ENCODE measurements at regions of chr18 and their contacts with region 1.

Region 1: GRCh38 chr18:75261430-75262223 is 51.0 kb downstream of the TSHZ1 start:
- DNase-seq: peak; percentile 35
- H3K4me3 Mint-ChIP-seq: no peak overlapping the region
- H3K27ac Mint-ChIP-seq: peak overlapping the region; percentile 75
- H3K4me1 Mint-ChIP-seq: peaks cover 33% of the 10 kb centered on the region
- H3K27me3 Mint-ChIP-seq: no peaks in the 10 kb centered on the region

Region 2: GRCh38 chr18:75247611-75248421 is 13.8 kb before region 1 on chr18:
- CTCF ChIA-PET with region 1: interaction called, 5 read pairs
- POLR2A ChIA-PET with region 1: no interaction called
- intact Hi-C with region 1: loop called (anchors 1 kb)
- DNase-seq: no peak
- H3K4me3 Mint-ChIP-seq: peak overlapping the region; percentile 77
- H3K27ac Mint-ChIP-seq: peak overlapping the region; percentile 87
- H3K4me1 Mint-ChIP-seq: peaks cover 58% of the 10 kb centered on the region
- H3K27me3 Mint-ChIP-seq: no peaks in the 10 kb centered on the region

Region 3: GRCh38 chr18:75654851-75655751 is 393.5 kb after region 1 on chr18:
- CTCF ChIA-PET with region 1: no interaction called
- POLR2A ChIA-PET with region 1: no interaction called
- intact Hi-C with region 1: no loop called
- DNase-seq: no peak
- H3K4me3 Mint-ChIP-seq: no peak overlapping the region
- H3K27ac Mint-ChIP-seq: no peak overlapping the region
- H3K4me1 Mint-ChIP-seq: no peaks in the 10 kb centered on the region
- H3K27me3 Mint-ChIP-seq: peaks cover 4% of the 10 kb centered on the region

Measured in activated CD4-positive, alpha-beta memory T cell treated with anti-CD3 and anti-CD28 coated beads for 36 hours (primary cell).